ENCODE measurements at regions of chr4 and their contacts with region 1.

Region 1: DNA sequence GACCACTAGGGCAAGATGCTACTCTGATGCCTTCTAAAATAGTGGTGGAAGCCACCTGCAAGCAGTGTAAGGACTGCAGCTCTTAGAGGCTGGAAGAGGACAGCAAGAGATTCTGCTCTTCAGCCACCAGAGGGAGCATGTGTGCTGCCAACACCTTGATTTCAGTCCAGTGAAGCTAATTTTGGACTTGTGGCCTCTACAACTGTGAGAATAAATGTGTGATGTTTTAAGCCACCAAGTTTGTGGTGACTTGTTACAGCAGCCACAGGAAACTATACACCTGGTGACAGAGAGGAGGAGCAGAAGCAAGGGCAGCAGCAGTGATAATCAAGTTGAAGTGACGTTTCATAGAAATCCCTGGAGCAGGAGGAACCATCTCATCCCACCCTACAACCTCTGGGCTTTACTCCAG is 55.9 kb downstream of the FGFBP1 start:
- DNase-seq: peak; percentile 57
- H3K4me3 ChIP-seq: no peak overlapping the region; a peak in 1 of 4 replicates
- H3K27ac ChIP-seq: no peak overlapping the region
- H3K4me1 ChIP-seq: peaks cover 0 to 3% of the 10 kb centered on the region in 2 experiments; a peak in 3 of 4 replicates
- H3K27me3 ChIP-seq: no peaks in the 10 kb centered on the region
- CTCF ChIP-seq: peak; percentile 96
- EP300 ChIP-seq: no peak
- RAD21 ChIP-seq: peak; percentile 89

Region 2: DNA sequence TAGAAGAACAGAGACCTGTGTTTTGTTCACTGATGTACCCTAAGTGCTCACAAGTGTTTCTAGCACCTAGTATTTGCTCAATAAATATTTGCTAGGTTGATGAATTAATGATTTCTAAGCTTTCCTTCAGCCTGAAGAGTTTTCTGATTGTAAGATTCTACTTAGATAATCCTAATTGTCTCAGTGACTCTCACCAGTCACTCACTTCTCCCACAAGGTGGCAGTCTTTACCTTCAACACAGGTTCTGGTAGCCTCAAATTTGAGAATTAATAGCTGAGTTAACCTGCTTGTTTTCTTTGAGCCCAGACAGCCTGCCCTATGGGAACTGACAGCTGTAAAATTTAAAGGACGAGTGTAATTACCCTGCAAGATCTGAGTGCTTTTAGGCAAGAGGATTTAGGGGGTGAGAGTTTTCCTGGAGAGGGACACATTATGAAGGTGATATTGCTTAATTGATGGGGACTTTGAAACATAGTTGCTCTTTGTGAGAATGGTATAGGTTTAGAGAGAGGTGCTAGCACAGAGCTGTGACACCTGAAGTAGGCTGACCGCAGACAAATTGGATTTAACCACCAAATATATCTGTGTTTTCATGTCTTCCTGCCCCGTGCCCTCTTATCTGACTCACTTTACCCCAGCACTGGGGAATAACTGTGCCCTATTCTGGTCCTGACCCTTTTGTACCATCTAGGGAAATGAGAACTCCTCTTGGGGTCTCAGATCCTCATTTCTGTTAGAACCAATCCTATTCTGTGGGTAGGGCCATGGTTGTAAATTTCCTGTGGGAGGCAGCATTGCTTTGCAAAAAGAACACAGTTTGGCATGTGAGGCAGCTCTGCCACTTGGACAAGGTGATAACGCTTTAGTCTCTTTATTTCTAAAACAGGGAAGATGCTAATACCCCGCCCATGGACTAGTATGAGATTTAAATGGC is 76.8 kb before region 1 on chr4:
- CTCF ChIA-PET with region 1: interaction called, 133 read pairs
- POLR2A ChIA-PET with region 1: no interaction called
- DNase-seq: peak; percentile 39
- H3K4me3 ChIP-seq: no peak overlapping the region; a peak in 1 of 4 replicates
- H3K27ac ChIP-seq: no peak overlapping the region
- H3K4me1 ChIP-seq: no peaks in the 10 kb centered on the region
- H3K27me3 ChIP-seq: no peaks in the 10 kb centered on the region; the same call in 1 of the 2 replicates
- CTCF ChIP-seq: peak; percentile 88
- EP300 ChIP-seq: no peak
- RAD21 ChIP-seq: peak; percentile 92

Region 3: GRCh38 chr4:15868111-15868510 is 14.6 kb before region 1 on chr4:
- CTCF ChIA-PET with region 1: interaction called, 35 read pairs
- POLR2A ChIA-PET with region 1: no interaction called
- DNase-seq: no peak
- H3K4me3 ChIP-seq: no peak overlapping the region
- H3K27ac ChIP-seq: no peak overlapping the region
- H3K4me1 ChIP-seq: no peaks in the 10 kb centered on the region
- H3K27me3 ChIP-seq: no peaks in the 10 kb centered on the region
- CTCF ChIP-seq: no peak
- EP300 ChIP-seq: no peak
- RAD21 ChIP-seq: no peak

Region 4: GRCh38 chr4:15918484-15919129 is 35.9 kb after region 1 on chr4:
- CTCF ChIA-PET with region 1: interaction called, 19 read pairs
- POLR2A ChIA-PET with region 1: no interaction called
- DNase-seq: peak; percentile 32
- H3K4me3 ChIP-seq: no peak overlapping the region
- H3K27ac ChIP-seq: no peak overlapping the region
- H3K4me1 ChIP-seq: peaks cover 11 to 13% of the 10 kb centered on the region in 2 experiments; a peak in 2 of 4 replicates
- H3K27me3 ChIP-seq: no peaks in the 10 kb centered on the region
- CTCF ChIP-seq: no peak
- EP300 ChIP-seq: no peak
- RAD21 ChIP-seq: no peak

Region 5: DNA sequence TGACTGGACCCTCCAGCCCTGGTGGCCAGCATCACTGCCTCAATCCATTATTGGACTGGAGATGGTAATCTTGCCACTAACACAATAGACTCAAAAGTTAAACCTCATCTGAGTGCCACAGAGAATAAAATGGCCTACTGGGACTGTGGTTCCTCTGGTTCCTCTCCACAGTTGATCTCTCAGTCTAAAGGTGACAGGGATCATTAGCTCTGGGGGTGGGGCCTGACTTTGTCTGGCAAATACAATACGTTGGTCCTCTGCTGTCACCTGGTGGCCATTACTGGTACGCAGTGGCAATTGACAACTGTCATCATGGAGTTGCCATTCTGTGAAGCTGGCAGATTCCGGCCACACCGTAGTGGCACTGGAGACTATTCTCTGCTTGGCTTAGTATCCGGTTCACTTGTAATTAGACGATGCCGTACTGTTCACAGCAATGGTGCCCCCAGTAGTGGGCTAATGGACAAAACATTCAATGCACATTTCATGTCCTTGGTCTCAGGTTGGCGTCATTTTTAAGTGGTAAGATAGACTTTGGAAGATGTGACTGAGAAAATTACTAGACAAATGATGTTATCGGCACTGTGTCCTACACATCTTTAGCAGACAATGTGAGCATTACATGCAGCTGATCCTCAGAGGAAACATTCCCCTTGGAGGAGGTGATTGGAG is 73.6 kb after region 1 on chr4:
- CTCF ChIA-PET with region 1: interaction called, 154 read pairs
- POLR2A ChIA-PET with region 1: no interaction called
- DNase-seq: peak; percentile 73
- H3K4me3 ChIP-seq: no peak overlapping the region
- H3K27ac ChIP-seq: no peak overlapping the region
- H3K4me1 ChIP-seq: peaks cover 0 to 3% of the 10 kb centered on the region in 2 experiments; a peak in 1 of 4 replicates
- H3K27me3 ChIP-seq: no peaks in the 10 kb centered on the region
- CTCF ChIP-seq: peak; percentile 98
- EP300 ChIP-seq: no peak
- RAD21 ChIP-seq: peak; percentile 92

Region 6: GRCh38 chr4:16006791-16007446 is 124.2 kb after region 1 on chr4:
- CTCF ChIA-PET with region 1: interaction called, 68 read pairs
- POLR2A ChIA-PET with region 1: no interaction called
- DNase-seq: no peak
- H3K4me3 ChIP-seq: no peak overlapping the region
- H3K27ac ChIP-seq: peak overlapping the region in 1 of 2 experiments; percentile 61; a peak in 2 of 4 replicates
- H3K4me1 ChIP-seq: peaks cover 0 to 15% of the 10 kb centered on the region in 2 experiments; a peak in 2 of 4 replicates
- H3K27me3 ChIP-seq: peaks cover 4% of the 10 kb centered on the region; the same call in 1 of the 2 replicates
- CTCF ChIP-seq: no peak
- EP300 ChIP-seq: no peak
- RAD21 ChIP-seq: no peak

Region 7: DNA sequence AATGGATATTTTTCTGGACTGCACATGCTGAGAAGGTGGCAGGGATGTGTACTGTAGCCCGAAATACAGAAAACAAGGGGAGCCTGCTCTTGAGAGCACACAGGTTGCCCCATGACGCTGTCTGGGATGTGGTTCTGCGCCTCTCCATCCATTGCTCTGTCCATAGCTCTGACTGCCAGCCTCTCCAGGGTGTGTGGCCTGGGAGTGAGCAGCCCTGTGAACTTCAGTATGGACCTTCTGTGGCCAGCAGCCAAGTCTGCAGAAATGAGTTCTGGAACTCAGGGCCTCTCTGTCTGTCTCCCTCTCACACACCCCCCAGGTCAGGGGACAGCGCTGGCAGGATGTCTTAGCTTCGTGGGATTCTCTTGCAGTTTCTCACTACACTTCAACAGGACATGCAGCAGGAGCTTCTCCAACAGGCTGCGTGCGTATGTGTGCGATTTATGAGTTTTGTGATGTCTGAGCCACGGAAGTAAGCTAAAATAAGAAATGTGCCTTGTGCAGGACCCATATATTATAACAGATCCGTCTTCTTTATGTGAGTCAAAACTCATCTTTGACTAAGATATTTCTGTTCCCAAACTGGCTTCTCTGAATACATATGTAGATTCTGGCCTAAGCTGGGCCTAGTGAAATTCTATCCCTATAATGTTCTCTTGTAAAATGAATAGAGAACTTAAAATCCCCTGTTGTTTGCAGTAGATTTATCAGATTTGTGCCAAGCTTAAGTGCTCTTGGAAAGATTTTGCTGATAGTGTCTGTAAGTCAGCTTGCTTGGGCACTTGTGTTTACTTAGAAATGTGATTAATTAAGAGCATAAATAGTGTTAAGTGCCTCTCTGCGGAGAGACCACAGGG is 161.2 kb after region 1 on chr4:
- CTCF ChIA-PET with region 1: no interaction called
- POLR2A ChIA-PET with region 1: no interaction called
- DNase-seq: no peak
- H3K4me3 ChIP-seq: no peak overlapping the region
- H3K27ac ChIP-seq: no peak overlapping the region
- H3K4me1 ChIP-seq: peaks cover 0 to 5% of the 10 kb centered on the region in 2 experiments; a peak in 2 of 4 replicates
- H3K27me3 ChIP-seq: no peaks in the 10 kb centered on the region; the same call in 1 of the 2 replicates
- CTCF ChIP-seq: no peak
- EP300 ChIP-seq: no peak
- RAD21 ChIP-seq: no peak

Measured in SK-N-SH (cell line).